H1 (cell line): ENCODE measurements at regions of chr12 and their contacts with region 1.

Region 1: GRCh38 chr12:130041983-130042812 is 120.1 kb upstream of the FZD10 start:
- DNase-seq: peak in 1 of 2 experiments; percentile 99
- H3K4me3 ChIP-seq: peak overlapping the region in 1 of 4 experiments; percentile 29; a peak in 1 of 8 replicates
- H3K27ac ChIP-seq: no peak overlapping the region
- H3K4me1 ChIP-seq: peaks cover 0 to 13% (median 5%) of the 10 kb centered on the region in 4 experiments; a peak in 5 of 7 replicates
- H3K27me3 ChIP-seq: peaks cover 22 to 81% (median 55%) of the 10 kb centered on the region in 4 experiments
- CTCF ChIP-seq: peak; percentile 91 to 95 (median 93)
- EP300 ChIP-seq: no peak
- POLR2A ChIP-seq: no peak
- RAD21 ChIP-seq: peak; percentile 82 to 92

Region 2: DNA sequence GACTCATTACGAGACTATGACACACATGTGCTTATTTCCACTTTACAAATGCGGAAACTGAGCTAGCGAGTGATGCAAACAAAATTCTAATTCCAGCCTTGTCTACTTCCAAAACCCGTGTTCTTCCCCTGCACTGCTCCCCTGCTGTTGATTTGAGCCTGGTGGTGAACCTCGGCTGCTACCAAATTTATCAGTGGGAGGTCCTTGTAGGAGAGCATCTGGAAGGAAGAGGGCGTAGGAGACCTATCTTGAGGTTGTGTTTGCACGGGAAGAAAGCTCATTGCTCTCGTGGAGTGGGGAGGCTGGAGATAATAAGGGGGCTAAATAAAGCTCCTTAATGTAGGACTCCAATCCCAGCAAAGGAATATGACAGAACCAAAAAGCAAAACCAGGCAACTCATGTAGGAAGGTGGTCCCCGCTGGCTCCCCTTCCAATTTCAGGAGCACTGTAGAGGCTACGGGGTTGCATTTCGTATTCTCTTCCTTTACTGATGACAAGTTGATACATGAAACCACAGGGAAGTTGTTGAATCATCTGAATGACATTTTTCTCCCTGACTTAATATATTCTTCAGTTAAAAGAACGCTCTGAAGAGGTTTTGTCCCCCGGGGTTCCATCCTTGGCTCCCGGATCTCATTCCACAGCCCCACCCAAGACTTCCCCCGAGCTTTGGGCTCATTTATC is 172.6 kb after region 1 on chr12:
- CTCF ChIA-PET with region 1: interaction called, 12 read pairs
- POLR2A ChIA-PET with region 1: no interaction called
- DNase-seq: no peak
- H3K4me3 ChIP-seq: no peak overlapping the region
- H3K27ac ChIP-seq: no peak overlapping the region
- H3K4me1 ChIP-seq: peaks cover 0 to 5% (median 2%) of the 10 kb centered on the region in 4 experiments; a peak in 4 of 7 replicates
- H3K27me3 ChIP-seq: peaks cover 11 to 60% (median 34%) of the 10 kb centered on the region in 4 experiments
- CTCF ChIP-seq: peak in 2 of 3 experiments; percentile 32 to 45; a peak in 3 of 4 replicates
- EP300 ChIP-seq: no peak
- POLR2A ChIP-seq: no peak
- RAD21 ChIP-seq: peak; percentile 27 to 52